ENCODE measurements at regions of chr3 and their contacts with region 1.

Region 1: GRCh38 chr3:131033480-131034080 is 6.9 kb downstream of the NEK11 start:
- DNase-seq: peak; percentile 55
- ATAC-seq: peak; percentile 66; the same call in 1 of the 2 replicates
- H3K4me3 ChIP-seq: no peak overlapping the region
- H3K27ac ChIP-seq: no peak overlapping the region
- H3K4me1 ChIP-seq: peaks cover 4% of the 10 kb centered on the region
- H3K27me3 ChIP-seq: no peaks in the 10 kb centered on the region
- CTCF ChIP-seq: peak; percentile 66
- POLR2A ChIP-seq: no peak
- RAD21 ChIP-seq: peak; percentile 69

Region 2: DNA sequence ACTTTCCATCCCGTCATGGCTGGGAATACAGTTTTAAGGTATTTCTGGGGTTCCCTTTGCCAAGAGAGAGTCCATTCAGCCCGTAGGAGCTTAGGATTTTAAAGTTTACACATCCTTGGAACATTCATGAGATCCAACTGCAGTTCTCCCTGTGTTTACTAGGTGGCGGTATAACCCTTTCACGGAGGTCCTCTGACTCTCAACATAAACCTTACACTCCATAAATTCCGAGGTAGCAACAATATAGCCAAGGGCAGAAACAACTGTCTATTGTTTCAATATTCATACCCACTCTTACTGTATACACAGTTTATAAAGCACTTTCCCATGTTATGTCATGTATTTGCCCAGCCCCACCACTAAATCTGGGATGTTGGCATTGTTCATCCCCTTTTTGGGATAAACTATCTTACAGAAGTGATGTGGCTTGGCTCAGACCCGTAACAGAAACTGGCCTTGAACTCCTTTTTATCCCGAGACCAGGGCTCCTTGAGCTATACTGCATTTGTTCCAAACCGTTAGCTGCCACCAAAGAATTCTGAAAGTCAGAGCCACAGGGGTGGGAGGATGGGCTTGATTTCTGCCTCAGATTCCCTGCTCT is 757.3 kb before region 1 on chr3:
- CTCF ChIA-PET with region 1: no interaction called
- POLR2A ChIA-PET with region 1: no interaction called
- dilution Hi-C with region 1: no loop called
- in situ Hi-C with region 1: no loop called
- intact Hi-C with region 1: loop called (anchors 10 kb)
- DNase-seq: peak; percentile 61
- ATAC-seq: peak; percentile 96
- H3K4me3 ChIP-seq: no peak overlapping the region
- H3K27ac ChIP-seq: no peak overlapping the region
- H3K4me1 ChIP-seq: no peaks in the 10 kb centered on the region
- H3K27me3 ChIP-seq: no peaks in the 10 kb centered on the region
- CTCF ChIP-seq: peak; percentile 85
- POLR2A ChIP-seq: no peak
- RAD21 ChIP-seq: peak; percentile 76

Region 3: DNA sequence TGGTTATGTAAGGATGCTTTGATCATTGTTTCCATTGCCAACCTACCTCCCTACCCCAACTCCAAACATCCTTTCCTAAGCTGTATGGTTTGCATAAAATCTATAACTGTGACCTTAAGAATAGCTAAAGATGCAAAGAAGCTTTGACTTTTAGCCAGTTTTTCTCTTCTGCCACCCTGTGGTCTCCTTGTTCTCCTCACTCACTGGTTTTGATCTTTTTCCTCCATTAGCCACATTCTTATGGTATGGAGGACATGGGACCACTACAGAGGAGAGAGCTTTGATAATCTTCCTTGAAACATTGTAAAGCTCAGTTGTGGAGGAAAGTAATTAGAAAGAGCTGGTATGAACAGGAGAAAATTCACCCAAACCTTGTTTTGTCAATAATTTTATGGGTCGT is 109.0 kb after region 1 on chr3:
- CTCF ChIA-PET with region 1: no interaction called
- POLR2A ChIA-PET with region 1: no interaction called
- dilution Hi-C with region 1: no loop called
- in situ Hi-C with region 1: no loop called
- intact Hi-C with region 1: loop called (anchors 5 kb)
- DNase-seq: peak; percentile 1
- ATAC-seq: no peak
- H3K4me3 ChIP-seq: no peak overlapping the region
- H3K27ac ChIP-seq: no peak overlapping the region
- H3K4me1 ChIP-seq: no peaks in the 10 kb centered on the region
- H3K27me3 ChIP-seq: no peaks in the 10 kb centered on the region
- CTCF ChIP-seq: no peak
- POLR2A ChIP-seq: no peak
- RAD21 ChIP-seq: no peak

Region 4: DNA sequence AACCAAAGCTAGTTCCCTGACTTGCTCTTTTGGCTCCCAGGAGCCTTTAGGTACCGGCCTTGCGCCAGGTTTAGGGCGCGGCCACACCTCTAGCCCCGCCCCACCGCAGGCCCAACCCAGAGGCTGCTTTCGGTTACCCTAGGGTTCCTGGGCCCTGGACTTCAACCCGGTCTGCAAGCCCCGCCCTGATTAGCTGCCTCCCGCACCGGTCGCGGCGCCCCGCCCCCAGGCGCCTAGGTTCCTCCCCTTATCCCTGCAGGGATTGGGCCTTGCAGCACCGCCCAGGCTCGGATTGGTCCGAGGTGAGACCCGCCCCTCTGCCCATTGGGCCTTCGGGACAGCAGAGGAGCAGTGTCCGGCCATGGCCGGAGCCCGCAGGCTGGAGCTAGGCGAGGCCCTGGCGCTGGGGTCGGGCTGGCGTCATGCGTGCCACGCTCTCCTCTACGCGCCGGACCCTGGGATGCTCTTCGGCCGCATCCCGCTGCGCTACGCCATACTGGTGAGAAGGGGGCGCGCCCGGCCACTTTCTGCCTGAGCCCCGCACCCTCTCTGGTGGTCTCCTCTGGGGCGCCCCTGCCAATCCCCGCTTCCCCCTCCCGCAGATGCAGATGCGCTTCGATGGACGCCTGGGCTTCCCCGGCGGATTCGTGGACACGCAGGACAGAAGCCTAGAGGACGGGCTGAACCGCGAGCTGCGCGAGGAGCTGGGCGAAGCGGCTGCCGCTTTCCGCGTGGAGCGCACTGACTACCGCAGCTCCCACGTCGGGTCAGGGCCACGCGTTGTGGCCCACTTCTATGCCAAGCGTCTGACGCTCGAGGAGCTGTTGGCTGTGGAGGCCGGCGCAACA is 348.1 kb after region 1 on chr3 and contains the start of gene NUDT16:
- CTCF ChIA-PET with region 1: interaction called, 3 read pairs
- POLR2A ChIA-PET with region 1: no interaction called
- dilution Hi-C with region 1: no loop called
- in situ Hi-C with region 1: no loop called
- intact Hi-C with region 1: loop called (anchors 2 kb)
- DNase-seq: peak; percentile 98
- ATAC-seq: peak; percentile 99
- H3K4me3 ChIP-seq: peak within 1 kb of the TSS; percentile 87
- H3K27ac ChIP-seq: peak within 1 kb of the TSS; percentile 68
- H3K4me1 ChIP-seq: 0 out of 2 replicates have a peak, but pooled peaks cover 2% of the 10 kb centered on the region
- H3K27me3 ChIP-seq: no peaks in the 10 kb centered on the region
- CTCF ChIP-seq: no peak
- POLR2A ChIP-seq: peak; percentile 79
- RAD21 ChIP-seq: no peak
- total RNA-seq, gene NUDT16: 7.8 and 10.4 TPM in 2 replicates

Region 5: DNA sequence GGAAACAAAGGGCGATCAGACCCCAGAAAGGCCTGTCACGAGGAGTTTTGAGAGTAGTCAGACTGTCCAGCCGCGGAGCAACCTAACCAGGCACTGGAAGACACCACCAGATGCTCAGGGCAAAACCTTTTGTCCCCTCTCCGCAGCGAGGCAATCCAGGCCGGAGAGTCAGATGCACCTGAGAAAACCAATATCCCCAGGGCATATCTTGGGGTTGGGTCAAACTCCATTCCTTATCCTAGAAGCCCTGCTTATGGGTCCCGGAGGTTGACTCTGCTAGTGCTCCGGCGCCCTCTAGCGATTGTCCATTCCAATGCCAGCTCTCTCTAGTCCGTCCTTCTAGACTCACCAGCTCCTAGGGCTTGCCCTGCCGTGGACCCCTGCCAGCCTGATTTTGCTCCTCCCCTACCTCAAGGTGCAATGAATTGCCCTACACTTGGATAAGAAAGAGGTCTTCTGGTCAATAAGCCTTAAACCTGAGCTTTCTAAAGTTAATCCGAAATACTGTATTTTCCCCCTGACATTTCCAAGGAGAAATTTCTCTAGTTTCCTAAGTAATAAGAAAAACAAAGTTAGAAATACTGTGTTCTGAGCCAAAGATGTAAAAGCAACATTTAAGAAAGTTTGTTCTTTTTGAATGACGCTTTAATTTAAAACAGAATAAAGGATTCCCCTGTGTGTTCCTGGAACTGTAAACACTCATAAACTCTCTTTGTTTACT is 995.8 kb after region 1 on chr3:
- CTCF ChIA-PET with region 1: interaction called, 4 read pairs
- POLR2A ChIA-PET with region 1: no interaction called
- dilution Hi-C with region 1: no loop called
- in situ Hi-C with region 1: loop called (anchors 25 kb)
- intact Hi-C with region 1: loop called (anchors 1 kb)
- DNase-seq: peak; percentile 61
- ATAC-seq: peak; percentile 100
- H3K4me3 ChIP-seq: no peak overlapping the region
- H3K27ac ChIP-seq: no peak overlapping the region
- H3K4me1 ChIP-seq: no peaks in the 10 kb centered on the region
- H3K27me3 ChIP-seq: peaks cover 14% of the 10 kb centered on the region
- CTCF ChIP-seq: peak; percentile 82
- POLR2A ChIP-seq: no peak
- RAD21 ChIP-seq: peak; percentile 90

Measured in IMR-90 (cell line).